A673 (cell line): ENCODE measurements at regions of chr9 and their contacts with region 1.

Region 1: DNA sequence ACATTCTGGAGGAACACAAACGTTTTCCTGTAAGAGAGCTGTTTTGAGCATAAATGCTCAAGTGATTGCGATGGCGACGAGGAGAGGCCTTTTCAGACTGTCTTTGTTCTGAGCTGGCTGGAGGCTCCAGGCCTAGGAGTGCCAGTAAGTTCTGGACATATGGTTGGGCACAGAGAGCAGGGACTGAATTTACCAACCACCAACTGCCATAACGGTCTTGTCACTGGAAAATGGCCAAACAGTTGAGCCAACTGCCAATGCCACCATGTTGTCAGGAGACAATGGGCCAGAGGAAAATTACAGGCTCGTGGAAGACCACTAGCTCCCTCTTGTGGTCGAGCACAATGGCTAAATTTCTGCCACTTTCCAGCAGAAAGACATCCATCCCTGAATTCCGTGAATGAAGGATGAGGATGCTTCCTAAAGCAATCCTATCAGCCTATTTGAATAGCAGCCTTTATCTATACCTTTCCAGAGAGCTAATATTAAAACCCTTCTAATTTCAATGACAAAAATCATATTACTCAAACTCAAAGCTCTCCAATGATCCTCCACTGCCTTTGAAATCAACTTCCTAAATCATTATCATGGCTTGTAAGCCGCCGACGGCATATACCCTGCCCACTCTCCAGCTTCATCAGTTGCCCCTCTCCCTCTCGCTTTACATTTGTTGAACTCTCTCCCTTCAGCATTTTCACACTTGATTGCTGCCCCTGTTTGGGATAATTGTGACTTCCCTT is 66.9 kb upstream of the GLIS3 start:
- DNase-seq: peak; percentile 65
- H3K4me3 ChIP-seq: no peak overlapping the region
- H3K27ac ChIP-seq: no peak overlapping the region
- H3K4me1 ChIP-seq: no peaks in the 10 kb centered on the region
- H3K27me3 ChIP-seq: no peaks in the 10 kb centered on the region
- CTCF ChIP-seq: peak; percentile 76

Region 2: GRCh38 chr9:2857564-2858198 is 1509.1 kb before region 1 on chr9:
- CTCF ChIA-PET with region 1: no interaction called
- POLR2A ChIA-PET with region 1: no interaction called
- intact Hi-C with region 1: loop called (anchors 5 kb)
- DNase-seq: peak; percentile 81
- H3K4me3 ChIP-seq: no peak overlapping the region
- H3K27ac ChIP-seq: no peak overlapping the region
- H3K4me1 ChIP-seq: no peaks in the 10 kb centered on the region
- H3K27me3 ChIP-seq: peaks cover 36% of the 10 kb centered on the region
- CTCF ChIP-seq: peak; percentile 89